GM12878 (cell line): ENCODE measurements at regions of chr5 and their contacts with region 1.

Region 1: DNA sequence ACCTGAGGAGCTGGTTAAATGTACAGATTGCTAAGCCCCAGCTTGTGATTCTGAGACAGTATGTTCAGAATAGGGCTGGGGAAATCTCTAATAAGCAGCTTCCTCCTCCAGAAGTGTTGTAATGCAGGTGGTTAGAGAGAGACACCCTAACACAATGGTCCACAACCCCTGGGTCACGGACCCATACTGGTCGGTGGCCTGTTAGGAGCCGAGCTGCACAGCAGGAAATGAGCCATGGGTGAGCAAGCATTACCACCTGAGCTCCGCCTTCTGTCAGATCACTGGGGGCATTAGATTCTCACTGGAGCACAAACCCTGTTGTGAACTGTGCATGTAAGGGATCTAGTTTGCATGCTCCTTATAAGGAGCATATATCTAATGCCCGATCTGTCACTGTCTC is 61.8 kb downstream of the SLC36A1 start:
- DNase-seq: no peak
- ATAC-seq: peak; percentile 32; the same call in 1 of the 3 replicates
- H3K4me3 ChIP-seq: no peak overlapping the region
- H3K27ac ChIP-seq: no peak overlapping the region
- H3K4me1 ChIP-seq: no peaks in the 10 kb centered on the region
- H3K27me3 ChIP-seq: no peaks in the 10 kb centered on the region
- CTCF ChIP-seq: no peak
- EP300 ChIP-seq: no peak
- POLR2A ChIP-seq: no peak
- RAD21 ChIP-seq: no peak

Region 2: DNA sequence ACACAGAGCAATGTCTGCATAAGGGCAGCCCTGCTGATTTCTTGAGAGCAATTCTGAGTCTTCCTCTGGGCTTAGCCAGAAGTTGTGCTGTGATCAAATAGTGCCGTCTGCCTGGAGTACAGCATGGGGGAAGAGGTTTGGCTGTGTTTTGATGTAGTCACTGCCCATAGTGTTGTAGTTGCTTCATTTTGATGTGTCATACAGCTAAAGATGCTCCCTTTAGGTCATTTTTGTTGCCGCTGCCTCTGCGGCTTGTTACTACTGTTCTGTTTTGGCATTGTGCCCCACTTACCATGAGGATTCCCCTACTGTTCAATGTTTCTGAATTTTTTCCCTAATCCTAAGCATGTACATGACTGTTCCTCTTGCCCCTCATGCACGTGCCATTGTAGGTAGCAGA is 38.8 kb before region 1 on chr5:
- CTCF ChIA-PET with region 1: no interaction called
- POLR2A ChIA-PET with region 1: no interaction called
- RAD21 ChIA-PET with region 1: no interaction called
- SMC1A ChIA-PET with region 1: no interaction called
- in situ Hi-C with region 1: no loop called
- intact Hi-C with region 1: no loop called
- DNase-seq: no peak
- ATAC-seq: no peak
- H3K4me3 ChIP-seq: no peak overlapping the region
- H3K27ac ChIP-seq: no peak overlapping the region
- H3K4me1 ChIP-seq: no peaks in the 10 kb centered on the region
- H3K27me3 ChIP-seq: no peaks in the 10 kb centered on the region
- CTCF ChIP-seq: no peak
- EP300 ChIP-seq: no peak
- POLR2A ChIP-seq: no peak
- RAD21 ChIP-seq: no peak

Region 3: DNA sequence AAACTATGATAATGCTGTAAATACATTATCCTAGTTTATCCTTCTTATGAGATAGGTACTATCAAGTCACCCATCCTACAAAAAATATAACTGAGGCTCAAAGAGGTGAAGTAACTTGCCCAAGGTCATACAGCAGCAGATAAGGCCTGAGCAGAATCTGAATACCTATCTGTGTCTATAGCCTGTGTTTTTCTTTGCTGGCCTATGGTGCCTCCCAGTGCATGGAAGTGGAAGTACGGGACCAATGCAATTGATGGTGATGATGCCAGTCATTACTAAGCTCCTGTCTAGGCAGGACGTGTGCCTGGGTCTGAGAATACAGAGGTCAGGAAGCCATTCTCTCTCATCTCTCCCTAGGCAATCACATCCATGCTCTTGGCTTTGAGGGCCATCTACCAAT is 14.1 kb after region 1 on chr5:
- CTCF ChIA-PET with region 1: interaction called, 5 read pairs
- POLR2A ChIA-PET with region 1: no interaction called
- RAD21 ChIA-PET with region 1: interaction called, 4 read pairs
- SMC1A ChIA-PET with region 1: interaction called, 12 read pairs
- in situ Hi-C with region 1: no loop called
- intact Hi-C with region 1: no loop called
- DNase-seq: no peak
- ATAC-seq: peak; percentile 97
- H3K4me3 ChIP-seq: no peak overlapping the region
- H3K27ac ChIP-seq: no peak overlapping the region
- H3K4me1 ChIP-seq: no peaks in the 10 kb centered on the region
- H3K27me3 ChIP-seq: peaks cover 0 to 1% of the 10 kb centered on the region in 2 experiments; a peak in 2 of 4 replicates
- CTCF ChIP-seq: peak; percentile 64 to 71 (median 68); a peak in 5 of 6 replicates
- EP300 ChIP-seq: no peak
- POLR2A ChIP-seq: no peak
- RAD21 ChIP-seq: peak; percentile 77

Region 4: GRCh38 chr5:151619796-151620460 is 110.7 kb after region 1 on chr5:
- CTCF ChIA-PET with region 1: no interaction called
- POLR2A ChIA-PET with region 1: no interaction called
- RAD21 ChIA-PET with region 1: no interaction called
- SMC1A ChIA-PET with region 1: no interaction called
- in situ Hi-C with region 1: no loop called
- intact Hi-C with region 1: no loop called
- DNase-seq: no peak
- ATAC-seq: no peak
- H3K4me3 ChIP-seq: no peak overlapping the region
- H3K27ac ChIP-seq: no peak overlapping the region
- H3K4me1 ChIP-seq: peaks cover 5% of the 10 kb centered on the region
- H3K27me3 ChIP-seq: no peaks in the 10 kb centered on the region; a peak in 1 of 4 replicates
- CTCF ChIP-seq: no peak
- EP300 ChIP-seq: no peak
- POLR2A ChIP-seq: no peak
- RAD21 ChIP-seq: no peak